ENCODE measurements at regions of chr11 and their contacts with region 1.

Region 1: DNA sequence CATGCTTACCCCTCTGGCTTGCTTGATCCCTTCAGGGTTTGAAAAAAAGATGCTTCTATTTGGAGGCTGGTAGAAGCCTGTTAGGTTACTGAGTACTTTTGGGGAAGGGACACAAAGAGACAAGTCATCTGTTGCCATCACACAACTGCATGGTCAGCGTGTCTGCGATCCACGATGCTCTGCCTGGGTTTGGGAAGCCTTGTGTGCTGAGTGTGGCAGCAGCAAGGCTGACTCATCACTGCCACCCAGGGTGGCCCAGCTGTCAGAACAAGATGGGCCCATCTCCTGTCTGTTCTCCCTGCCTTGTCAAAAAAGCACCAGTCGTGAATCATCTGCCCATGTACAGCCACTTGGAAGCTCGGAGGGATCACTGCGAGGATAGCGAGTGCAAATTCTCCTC is 26.2 kb downstream of the UBASH3B start:
- DNase-seq: no peak
- H3K4me3 ChIP-seq: no peak overlapping the region
- CTCF ChIP-seq: no peak

Region 2: GRCh38 chr11:122668562-122669090 is 13.1 kb before region 1 on chr11:
- CTCF ChIA-PET with region 1: interaction called, 12 read pairs
- POLR2A ChIA-PET with region 1: no interaction called
- DNase-seq: no peak
- H3K4me3 ChIP-seq: no peak overlapping the region
- CTCF ChIP-seq: no peak

Measured in AG04449 (cell line).